ENCODE measurements at regions of chr11 and their contacts with region 1.

Region 1: DNA sequence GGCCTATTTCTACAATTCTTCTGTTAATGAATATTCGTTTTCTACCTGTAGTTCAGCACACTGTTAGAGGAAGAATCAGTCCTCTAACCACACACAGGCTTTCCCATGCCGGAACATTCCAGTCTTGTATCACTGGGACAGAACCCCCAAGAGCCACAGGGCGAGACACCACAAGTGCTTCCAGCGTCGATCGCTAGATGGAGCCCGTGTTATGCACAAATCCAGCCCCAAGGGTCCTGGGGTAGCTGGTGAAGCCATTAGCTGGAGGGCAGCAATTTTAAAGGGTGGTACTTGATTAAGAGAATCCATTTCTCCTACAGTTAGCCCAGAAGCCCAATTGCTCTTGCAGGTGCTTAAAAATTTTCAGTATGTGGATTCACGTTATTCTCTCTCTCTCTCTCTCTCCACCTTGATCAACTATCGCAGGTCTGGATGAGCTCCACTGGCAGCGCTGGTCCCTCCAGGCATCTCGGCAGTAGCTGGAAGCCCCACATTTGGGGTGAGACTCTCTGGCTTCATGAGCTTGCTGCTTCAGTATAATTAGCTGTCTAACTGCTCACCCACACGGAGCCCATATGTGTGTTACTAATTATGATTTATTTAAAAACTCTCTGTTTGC is 148.2 kb upstream of the SNX19 start:
- DNase-seq: no peak
- H3K4me3 ChIP-seq: no peak overlapping the region
- CTCF ChIP-seq: peak; percentile 87

Region 2: DNA sequence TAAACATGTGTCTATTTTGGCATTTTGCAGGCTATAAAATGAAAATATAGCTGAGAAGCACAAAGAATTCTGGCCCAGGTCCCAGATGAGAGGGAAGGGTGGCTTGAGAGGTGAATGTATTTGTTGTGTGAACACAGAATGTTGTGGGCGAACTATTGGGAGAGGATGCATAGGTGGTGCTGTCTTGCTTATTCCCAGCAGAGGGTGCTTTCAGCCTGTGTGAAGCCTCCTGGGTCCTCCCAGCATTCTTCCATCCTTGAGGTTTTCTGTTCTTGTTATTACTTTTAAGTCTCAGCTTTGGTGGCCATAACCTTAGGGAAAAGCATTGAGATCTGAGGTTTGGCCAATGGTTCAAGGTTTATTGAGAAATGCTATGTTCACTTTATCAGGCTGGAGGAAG is 39.5 kb before region 1 on chr11:
- CTCF ChIA-PET with region 1: interaction called, 25 read pairs
- POLR2A ChIA-PET with region 1: no interaction called
- DNase-seq: peak; percentile 24
- H3K4me3 ChIP-seq: no peak overlapping the region
- CTCF ChIP-seq: peak; percentile 75

Region 3: DNA sequence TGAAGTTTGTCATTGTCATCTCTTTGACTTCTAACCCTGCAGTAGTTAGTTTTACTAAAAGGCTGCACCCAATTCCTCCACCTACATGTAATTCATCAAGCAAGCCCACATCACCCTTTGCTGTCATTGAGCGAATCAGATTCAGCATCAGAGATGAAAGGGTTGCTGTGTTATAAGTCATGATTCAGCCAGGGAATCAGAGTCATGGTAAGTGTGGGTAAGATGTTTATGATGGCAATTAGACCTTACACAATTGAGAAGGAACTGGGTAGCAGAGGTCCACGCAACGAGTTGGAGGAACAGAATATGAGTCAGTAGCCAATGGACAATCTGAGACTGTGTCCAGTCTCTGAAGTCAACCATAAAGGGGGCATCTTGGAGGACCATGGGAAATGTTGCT is 14.6 kb after region 1 on chr11:
- CTCF ChIA-PET with region 1: interaction called, 20 read pairs
- POLR2A ChIA-PET with region 1: no interaction called
- DNase-seq: no peak
- H3K4me3 ChIP-seq: no peak overlapping the region
- CTCF ChIP-seq: no peak

Region 4: DNA sequence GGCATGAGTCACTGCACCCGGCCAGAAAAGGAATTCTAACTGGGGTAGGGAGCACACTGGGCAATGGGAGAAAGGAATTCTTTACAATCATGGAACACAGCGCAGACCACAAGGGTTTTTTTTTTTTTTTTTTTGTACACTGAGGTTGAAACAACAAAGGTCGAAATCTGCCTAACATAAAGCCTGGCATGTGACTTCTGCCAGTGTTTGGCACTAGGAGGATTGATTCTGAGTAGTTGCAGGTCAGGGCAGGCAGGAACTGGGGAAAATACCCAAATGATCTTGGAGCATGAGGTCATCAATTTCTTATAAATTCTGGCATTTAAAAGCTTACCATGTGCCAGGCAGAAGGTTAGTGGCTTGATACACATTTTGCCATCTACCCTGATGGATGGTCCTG is 53.8 kb after region 1 on chr11:
- CTCF ChIA-PET with region 1: no interaction called
- POLR2A ChIA-PET with region 1: no interaction called
- DNase-seq: no peak
- H3K4me3 ChIP-seq: no peak overlapping the region
- CTCF ChIP-seq: no peak

Region 5: DNA sequence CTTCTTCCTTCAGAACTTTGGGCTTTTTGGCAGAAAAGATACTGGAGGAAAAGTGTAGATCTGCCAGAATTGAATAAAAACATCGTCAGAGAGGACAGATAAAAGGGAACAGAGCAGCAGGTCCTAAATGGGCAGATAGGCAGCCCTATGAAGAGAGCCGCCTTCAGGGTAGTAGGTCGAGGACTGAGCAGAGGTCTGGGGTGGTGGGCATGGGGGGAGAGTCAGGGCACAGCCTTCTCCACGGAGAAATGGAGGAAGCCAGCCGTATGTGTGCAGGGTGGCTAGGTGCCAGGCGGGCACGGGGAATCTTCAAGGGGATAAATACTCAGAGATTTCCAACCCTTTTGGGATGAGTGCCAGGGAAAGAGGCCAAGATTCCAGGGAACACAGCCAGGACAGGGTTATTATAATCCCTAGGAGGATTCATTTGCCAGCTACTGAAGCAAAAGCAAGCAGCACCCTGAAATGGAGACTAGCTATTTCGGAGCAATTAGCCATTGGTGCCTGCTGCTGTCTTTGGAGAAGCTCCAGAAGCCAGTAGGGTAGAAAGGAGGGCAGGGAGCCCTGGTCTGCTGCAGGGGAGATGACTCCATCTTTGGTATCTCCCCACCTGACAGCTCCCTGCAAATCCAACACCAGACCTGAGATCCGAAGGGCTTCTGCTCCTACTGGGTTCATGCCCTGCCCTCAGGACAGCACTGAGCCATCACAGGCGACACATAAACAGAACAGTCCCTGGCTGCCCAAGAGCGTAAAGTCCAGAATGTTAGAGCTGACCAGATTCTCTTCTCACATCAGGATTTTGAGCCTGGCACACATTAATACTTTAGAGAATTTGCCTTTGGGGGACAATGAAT is 131.4 kb after region 1 on chr11:
- CTCF ChIA-PET with region 1: interaction called, 12 read pairs
- POLR2A ChIA-PET with region 1: no interaction called
- DNase-seq: no peak
- H3K4me3 ChIP-seq: no peak overlapping the region
- CTCF ChIP-seq: no peak

Region 6: GRCh38 chr11:131408025-131408640 is 343.7 kb after region 1 on chr11:
- CTCF ChIA-PET with region 1: interaction called, 13 read pairs
- POLR2A ChIA-PET with region 1: no interaction called
- DNase-seq: no peak
- H3K4me3 ChIP-seq: no peak overlapping the region
- CTCF ChIP-seq: peak; percentile 48

Region 7: DNA sequence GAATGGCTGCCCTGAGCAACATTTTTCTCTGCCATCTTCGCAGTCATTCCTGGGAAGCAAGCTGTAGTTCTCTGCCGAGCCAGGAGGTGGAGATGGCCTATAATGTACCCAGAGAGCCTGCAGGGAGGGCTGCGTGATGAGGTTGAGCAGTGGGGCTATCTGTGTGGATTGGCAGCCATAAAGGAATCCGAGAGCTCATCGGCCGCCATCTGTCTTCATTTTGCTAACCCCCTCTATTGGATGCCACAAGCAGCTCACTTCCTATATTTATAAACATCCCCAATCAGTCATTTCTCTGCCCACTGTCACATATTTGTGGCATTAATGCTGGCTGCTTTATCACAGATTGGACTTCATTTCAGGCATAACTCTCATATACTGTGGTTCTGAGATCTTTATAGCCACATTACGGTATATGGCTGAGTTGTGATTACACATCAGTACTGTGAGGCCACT is 515.5 kb after region 1 on chr11:
- CTCF ChIA-PET with region 1: interaction called, 15 read pairs
- POLR2A ChIA-PET with region 1: no interaction called
- DNase-seq: peak; percentile 82
- H3K4me3 ChIP-seq: no peak overlapping the region
- CTCF ChIP-seq: peak; percentile 86

Region 8: DNA sequence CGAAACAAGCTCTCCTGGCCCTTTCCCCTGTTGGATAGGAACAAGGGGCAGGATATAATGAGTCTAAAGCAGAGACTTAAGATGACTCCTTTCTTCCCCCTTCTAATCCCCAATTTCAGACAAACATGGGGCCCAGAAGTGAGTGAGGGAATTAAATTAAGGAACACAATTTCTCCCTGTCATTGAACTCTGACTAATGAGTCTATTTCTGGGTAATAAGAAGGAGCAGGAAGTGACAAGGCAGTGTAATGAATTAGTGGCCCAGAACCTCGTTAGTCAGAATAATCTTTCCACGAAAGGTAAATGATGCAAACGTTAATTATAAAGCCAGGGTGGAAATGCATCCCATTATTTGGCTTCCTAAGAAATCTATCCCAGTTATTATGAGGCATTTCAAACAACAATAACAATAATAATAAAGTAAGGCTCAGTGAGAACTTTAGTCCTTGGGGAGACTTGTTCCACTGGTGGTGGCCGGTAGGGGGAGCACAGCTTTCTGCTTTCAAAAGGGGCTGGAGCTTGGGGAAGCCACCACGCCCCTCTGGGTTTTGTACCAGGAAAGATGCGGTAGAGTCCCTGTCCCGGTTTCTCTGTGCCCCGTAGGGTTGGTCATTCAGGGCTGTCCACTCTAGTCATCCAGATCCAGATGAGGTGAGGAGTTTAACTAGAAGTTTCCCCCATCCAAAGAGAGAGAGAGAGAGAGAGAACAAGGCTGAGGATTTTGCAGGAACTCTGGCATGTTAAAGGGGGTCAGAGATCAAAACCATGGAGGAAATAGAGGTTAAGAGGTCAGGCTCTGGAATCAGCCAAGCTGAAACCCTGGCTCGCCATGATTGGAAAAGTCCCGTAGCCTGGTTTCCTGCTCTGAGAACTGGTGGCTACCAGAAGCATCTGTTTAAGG is 604.3 kb after region 1 on chr11:
- CTCF ChIA-PET with region 1: interaction called, 79 read pairs
- POLR2A ChIA-PET with region 1: interaction called, 3 read pairs
- DNase-seq: no peak
- H3K4me3 ChIP-seq: no peak overlapping the region
- CTCF ChIP-seq: peak; percentile 58

Measured in AG04449 (cell line).